Activated naive CD8-positive, alpha-beta T cell treated with anti-CD3 and anti-CD28 coated beads, Interleukin-2, amount 10 ng/mL, durations not matched to agents 7 days and 5 days (primary cell): ENCODE measurements at regions of chr12 and their contacts with region 1.

Region 1: DNA sequence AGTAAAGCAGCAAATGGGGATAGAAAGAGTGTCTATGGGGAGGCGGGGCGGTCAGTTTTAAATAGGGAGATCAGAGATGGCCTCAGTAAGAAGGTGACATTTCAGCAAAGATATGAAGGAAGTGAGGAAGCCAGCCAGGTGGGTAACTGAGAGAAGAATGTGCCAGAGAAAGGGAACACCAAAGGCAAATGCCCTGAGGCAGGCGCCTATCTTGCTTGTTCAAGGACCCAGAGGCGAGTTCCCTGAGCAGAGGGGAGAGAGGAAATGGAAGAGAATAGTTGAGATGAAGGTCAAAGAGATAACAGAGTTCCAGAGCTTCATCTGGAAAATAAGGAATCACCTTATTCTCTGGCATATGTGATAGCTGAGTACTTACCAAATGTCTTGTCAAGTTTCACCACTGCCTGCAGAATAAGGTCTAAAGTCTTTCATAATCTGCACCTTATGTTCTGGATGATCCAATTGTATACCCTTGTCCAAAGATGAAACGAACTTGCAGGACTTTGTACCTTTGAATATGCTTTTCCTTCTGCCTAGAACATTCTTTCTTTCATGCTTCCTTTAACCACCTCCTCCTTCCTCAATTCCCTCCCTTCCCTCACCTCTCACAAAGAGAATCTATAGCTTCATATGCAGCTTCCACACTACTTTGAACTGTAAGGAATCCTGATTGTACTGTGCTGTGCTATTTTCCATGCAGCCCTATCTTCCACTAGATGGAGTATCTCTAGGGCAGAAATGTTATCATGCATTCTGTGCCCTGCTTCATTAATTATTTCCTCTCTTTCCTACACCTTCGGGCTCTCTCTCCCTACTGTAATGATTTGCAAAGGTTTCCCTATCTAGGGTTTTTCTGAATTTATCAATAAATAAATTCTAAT is 38.5 kb downstream of the GNPTAB start:
- DNase-seq: no peak
- ATAC-seq: no peak
- H3K4me3 Mint-ChIP-seq: peak overlapping the region; percentile 29
- H3K27ac Mint-ChIP-seq: peak overlapping the region; percentile 77
- H3K4me1 Mint-ChIP-seq: peaks cover 44% of the 10 kb centered on the region
- H3K27me3 Mint-ChIP-seq: no peaks in the 10 kb centered on the region

Region 2: DNA sequence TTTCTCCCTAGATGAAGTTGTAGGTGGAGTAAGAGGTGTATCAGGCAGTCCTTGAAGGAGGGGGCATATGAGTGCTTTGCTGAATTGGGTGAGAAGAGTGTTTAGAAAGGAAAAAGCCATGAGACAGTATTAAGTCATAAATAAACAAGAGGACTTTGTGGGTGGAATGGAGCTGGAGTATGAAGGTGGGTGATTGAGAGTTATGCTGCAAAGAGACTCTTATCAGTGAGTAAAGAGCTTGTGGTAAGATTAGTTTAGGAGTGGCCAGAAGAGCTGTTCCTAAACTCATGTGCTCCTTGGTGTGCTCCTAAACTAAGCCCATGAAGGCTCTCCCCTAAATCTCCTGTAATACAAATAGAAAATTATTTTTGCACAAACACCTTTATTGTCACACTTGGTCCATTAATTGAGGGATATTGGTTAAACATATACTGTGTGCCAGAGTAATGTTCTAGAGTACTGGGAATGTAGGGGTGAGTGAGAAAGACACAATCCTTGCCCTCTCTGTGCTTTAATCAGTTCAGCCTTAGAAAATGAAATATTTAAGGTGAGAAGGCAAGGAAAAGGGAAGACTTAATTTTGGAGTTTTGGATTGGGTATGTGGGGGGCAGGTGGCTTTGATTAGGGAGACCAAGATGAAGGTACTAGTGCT is 85.0 kb before region 1 on chr12:
- POLR2A ChIA-PET with region 1: no interaction called
- DNase-seq: no peak
- ATAC-seq: no peak
- H3K4me3 Mint-ChIP-seq: no peak overlapping the region
- H3K27ac Mint-ChIP-seq: no peak overlapping the region
- H3K4me1 Mint-ChIP-seq: peaks cover 13% of the 10 kb centered on the region
- H3K27me3 Mint-ChIP-seq: no peaks in the 10 kb centered on the region

Region 3: GRCh38 chr12:101743724-101744472 is 48.4 kb before region 1 on chr12:
- POLR2A ChIA-PET with region 1: no interaction called
- DNase-seq: no peak
- ATAC-seq: peak; percentile 46
- H3K4me3 Mint-ChIP-seq: no peak overlapping the region
- H3K27ac Mint-ChIP-seq: peak overlapping the region; percentile 62
- H3K4me1 Mint-ChIP-seq: peaks cover 14% of the 10 kb centered on the region
- H3K27me3 Mint-ChIP-seq: no peaks in the 10 kb centered on the region

Region 4: GRCh38 chr12:101803978-101804377 is 11.7 kb after region 1 on chr12:
- POLR2A ChIA-PET with region 1: no interaction called
- DNase-seq: no peak
- ATAC-seq: no peak
- H3K4me3 Mint-ChIP-seq: no peak overlapping the region
- H3K27ac Mint-ChIP-seq: no peak overlapping the region
- H3K4me1 Mint-ChIP-seq: peaks cover 47% of the 10 kb centered on the region
- H3K27me3 Mint-ChIP-seq: no peaks in the 10 kb centered on the region

Region 5: DNA sequence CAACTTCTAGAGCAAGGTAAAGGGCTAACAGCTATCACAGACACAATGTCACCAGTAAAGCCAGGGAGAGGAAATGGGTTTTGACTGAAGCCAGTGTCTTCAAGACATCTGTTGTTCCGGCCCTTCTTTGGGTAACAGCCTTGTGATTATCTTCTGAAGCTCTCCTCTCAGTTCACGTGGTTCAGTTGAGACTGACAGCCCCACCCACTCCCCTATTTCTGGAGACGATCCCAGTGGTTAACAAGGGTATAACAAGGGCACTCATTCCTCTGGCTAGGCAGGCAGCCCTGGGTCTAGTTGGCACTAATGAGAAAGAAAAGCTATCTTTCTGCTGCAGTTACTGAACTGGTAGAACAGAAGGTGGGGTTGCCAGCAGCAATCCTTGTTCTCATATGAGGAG is 31.6 kb after region 1 on chr12:
- POLR2A ChIA-PET with region 1: interaction called, 85 read pairs
- DNase-seq: peak; percentile 51
- ATAC-seq: peak; percentile 97
- H3K4me3 Mint-ChIP-seq: peak overlapping the region; percentile 71
- H3K27ac Mint-ChIP-seq: peak overlapping the region; percentile 78
- H3K4me1 Mint-ChIP-seq: peaks cover 65% of the 10 kb centered on the region
- H3K27me3 Mint-ChIP-seq: no peaks in the 10 kb centered on the region

Region 6: GRCh38 chr12:101830367-101831325 is 38.4 kb after region 1 on chr12 and contains the start of gene GNPTAB:
- POLR2A ChIA-PET with region 1: interaction called, 85 read pairs
- DNase-seq: peak; percentile 97
- ATAC-seq: peak; percentile 95
- H3K4me3 Mint-ChIP-seq: peak within 1 kb of the TSS; percentile 100
- H3K27ac Mint-ChIP-seq: peak within 1 kb of the TSS; percentile 97
- H3K4me1 Mint-ChIP-seq: peaks cover 38% of the 10 kb centered on the region
- H3K27me3 Mint-ChIP-seq: no peaks in the 10 kb centered on the region
- total RNA-seq, gene GNPTAB: 89.5 to 91.1 TPM